ENCODE measurements at regions of chr10 and their contacts with region 1.

Region 1: GRCh38 chr10:62244780-62245467 is 23.7 kb downstream of the RTKN2 start:
- DNase-seq: peak; percentile 53
- ATAC-seq: peak; percentile 84
- H3K4me3 ChIP-seq: no peak overlapping the region
- H3K27ac ChIP-seq: no peak overlapping the region
- H3K4me1 ChIP-seq: peaks cover 6 to 13% of the 10 kb centered on the region in 2 experiments
- H3K27me3 ChIP-seq: no peaks in the 10 kb centered on the region
- CTCF ChIP-seq: peak; percentile 83 to 91 (median 83)
- POLR2A ChIP-seq: no peak
- RAD21 ChIP-seq: peak; percentile 86

Region 2: DNA sequence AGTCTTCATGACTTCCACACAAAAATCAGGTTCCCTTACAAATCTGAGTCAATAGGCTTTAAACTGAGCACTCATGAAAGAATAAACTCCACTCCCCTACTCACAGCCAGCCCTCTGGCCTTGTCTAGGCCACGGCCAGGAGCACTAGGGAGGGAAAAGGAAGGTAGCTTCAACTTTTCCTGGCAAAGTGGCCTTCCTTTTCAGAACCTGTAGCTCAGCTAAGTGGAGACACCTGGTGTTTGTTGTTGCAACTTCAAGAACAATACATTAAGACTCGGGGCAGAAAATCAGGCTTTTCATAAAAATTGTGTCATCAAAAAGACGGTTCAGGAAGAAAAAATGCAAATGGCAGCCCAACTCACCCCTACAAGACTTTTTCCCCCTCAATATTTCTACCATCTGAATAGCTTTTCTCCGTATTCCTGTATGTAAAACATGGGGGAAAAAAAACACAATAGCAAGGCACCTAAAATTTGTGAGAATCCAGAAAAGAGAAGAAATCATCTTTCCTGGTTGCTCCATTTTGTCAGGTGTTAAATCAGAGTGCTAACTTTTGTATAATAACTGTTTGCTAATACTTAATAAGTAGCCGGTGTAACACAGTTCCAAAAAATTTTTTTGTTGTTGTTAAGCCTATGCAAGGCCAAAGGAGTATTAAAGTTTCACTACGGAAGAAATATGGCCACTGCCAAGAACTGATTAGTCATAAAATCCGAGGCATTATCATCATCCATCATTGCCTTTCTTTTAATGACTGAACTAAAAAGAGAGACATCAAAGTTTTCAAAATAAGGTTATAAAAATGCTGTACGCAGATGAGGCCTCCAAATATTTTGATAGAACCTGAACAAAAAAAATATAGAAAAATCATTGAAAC is 409.6 kb before region 1 on chr10:
- CTCF ChIA-PET with region 1: no interaction called
- POLR2A ChIA-PET with region 1: no interaction called
- RAD21 ChIA-PET with region 1: no interaction called
- intact Hi-C with region 1: loop called (anchors 10 kb)
- DNase-seq: peak; percentile 71
- ATAC-seq: peak; percentile 62
- H3K4me3 ChIP-seq: peak overlapping the region in 1 of 2 experiments; percentile 41; a peak in 1 of 4 replicates
- H3K27ac ChIP-seq: peak overlapping the region; percentile 85; the same call in 1 of the 2 replicates
- H3K4me1 ChIP-seq: peaks cover 32 to 50% of the 10 kb centered on the region in 2 experiments
- H3K27me3 ChIP-seq: no peaks in the 10 kb centered on the region
- CTCF ChIP-seq: peak; percentile 62 to 63 (median 62); a peak in 5 of 6 replicates
- POLR2A ChIP-seq: no peak
- RAD21 ChIP-seq: peak; percentile 80

Region 3: DNA sequence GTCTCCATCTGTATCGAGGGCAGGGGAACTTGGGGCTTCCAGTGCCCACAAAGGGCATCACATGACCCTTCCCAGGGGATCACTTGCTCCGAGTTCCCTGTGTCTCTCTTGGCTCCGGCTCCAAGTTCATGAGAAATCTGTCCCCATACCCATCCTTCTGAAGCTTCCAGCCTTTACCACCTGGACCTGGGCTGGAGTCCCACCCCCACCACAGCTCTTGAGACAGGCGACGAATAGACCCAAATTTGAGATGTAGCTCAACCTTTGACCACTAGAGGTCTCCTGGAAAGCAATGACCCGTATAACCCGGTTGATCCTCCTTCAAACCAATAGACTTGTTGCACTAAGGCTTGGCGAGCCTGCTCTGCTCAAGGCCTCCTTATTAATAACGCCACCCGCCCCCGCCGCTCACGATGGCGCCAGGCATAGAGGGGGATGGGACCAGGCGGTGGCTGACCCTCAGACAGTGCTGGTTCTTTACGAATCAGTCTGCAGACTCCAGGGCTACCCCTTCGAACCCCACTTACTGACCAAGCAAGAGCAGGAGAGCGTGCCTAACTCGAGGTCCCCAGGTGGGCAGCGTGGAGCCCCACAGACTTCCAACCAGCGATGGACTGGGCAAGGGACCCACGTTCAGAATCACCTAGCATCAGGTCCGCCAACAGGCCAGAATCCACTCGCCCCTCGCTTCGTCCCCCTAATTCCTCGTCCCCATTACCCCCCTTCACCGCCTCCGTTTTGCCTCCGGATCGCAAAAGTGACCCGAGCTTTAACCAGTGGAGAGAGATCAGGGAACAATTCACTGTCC is 347.9 kb before region 1 on chr10:
- CTCF ChIA-PET with region 1: interaction called, 16 read pairs
- POLR2A ChIA-PET with region 1: no interaction called
- RAD21 ChIA-PET with region 1: no interaction called
- intact Hi-C with region 1: loop called (anchors 2 kb)
- DNase-seq: peak; percentile 80
- ATAC-seq: peak; percentile 79
- H3K4me3 ChIP-seq: peak overlapping the region in 1 of 2 experiments; percentile 18; a peak in 1 of 4 replicates
- H3K27ac ChIP-seq: peak overlapping the region; percentile 43; the same call in 1 of the 2 replicates
- H3K4me1 ChIP-seq: peaks cover 15 to 31% of the 10 kb centered on the region in 2 experiments
- H3K27me3 ChIP-seq: no peaks in the 10 kb centered on the region
- CTCF ChIP-seq: peak; percentile 50 to 70 (median 69); a peak in 5 of 6 replicates
- POLR2A ChIP-seq: no peak
- RAD21 ChIP-seq: peak; percentile 53

Region 4: DNA sequence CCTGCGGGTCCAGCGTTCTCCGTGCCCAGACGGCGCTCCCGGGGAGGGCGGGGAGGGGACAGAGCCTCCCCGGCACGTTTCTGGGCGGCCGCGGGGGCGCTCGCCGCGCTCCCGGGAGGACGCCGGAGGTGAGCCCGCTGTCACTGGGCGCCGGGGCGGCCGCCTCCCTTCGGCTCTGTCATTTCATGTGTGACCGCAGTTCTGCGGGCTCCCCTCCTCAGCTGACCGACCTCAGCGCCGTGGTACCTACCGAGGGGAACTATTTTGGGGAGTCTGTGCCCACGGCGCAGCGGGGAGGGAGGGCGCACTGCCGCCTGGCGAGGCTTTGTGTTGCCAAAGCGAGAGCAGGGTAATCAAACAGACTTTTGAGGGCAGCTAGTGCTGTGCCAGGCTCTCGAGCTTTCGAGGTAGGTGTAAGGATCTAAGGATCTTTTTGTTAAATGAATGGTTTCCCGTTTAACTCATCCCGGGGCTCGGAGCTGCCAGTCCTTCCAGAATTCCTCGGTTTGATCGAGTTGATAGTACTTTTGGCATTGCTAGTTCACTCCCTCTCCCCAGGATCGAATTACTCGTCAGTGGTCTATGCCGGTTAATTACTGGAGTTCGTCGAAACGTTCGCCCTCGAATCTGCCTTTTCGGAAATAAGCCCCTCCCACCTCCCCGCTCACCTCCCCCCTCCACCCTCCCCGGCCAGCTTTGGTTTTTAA is 341.6 kb before region 1 on chr10:
- CTCF ChIA-PET with region 1: interaction called, 3 read pairs
- POLR2A ChIA-PET with region 1: no interaction called
- RAD21 ChIA-PET with region 1: no interaction called
- intact Hi-C with region 1: loop called (anchors 2 kb)
- DNase-seq: peak; percentile 42
- ATAC-seq: peak; percentile 64
- H3K4me3 ChIP-seq: peak overlapping the region; percentile 64 to 75
- H3K27ac ChIP-seq: peak overlapping the region; percentile 92
- H3K4me1 ChIP-seq: peaks cover 13 to 29% of the 10 kb centered on the region in 2 experiments; a peak in 3 of 4 replicates
- H3K27me3 ChIP-seq: no peaks in the 10 kb centered on the region
- CTCF ChIP-seq: peak in 2 of 3 experiments; percentile 23 to 24; a peak in 2 of 6 replicates
- POLR2A ChIP-seq: no peak
- RAD21 ChIP-seq: no peak

Region 5: DNA sequence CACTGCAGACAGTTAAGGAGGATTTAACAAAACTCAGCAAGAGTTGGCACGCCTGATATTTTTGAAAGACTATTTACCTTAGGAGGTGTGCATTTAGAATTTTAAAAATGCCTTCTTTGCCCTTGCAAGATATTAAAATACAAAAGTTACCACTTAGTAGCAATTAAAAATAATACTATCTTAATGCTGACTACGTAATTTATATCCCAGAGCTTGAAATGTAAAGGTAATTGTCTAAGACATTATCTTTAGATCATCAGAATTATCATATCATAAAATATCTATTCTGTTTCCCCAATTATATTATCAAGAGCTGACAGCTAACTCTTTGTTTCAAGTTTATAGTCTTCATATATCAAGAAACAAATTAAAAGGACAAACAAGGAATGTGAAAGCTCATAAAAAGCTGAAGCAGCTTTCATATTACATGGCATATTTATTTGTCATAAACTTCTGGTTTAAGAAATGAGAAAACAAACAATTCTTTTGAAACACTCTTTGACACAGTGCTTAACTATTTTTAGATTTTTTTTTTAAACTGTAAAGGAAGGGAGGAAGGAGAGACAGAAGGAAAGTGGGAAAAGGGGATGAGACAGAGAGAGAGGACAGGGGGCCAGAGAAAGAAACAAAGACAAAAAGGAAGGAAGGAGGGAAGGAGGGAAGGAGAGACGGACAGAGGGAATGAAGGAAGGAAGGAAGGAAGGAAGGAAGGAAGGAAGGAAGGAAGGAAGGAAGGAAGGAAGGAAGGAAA is 49.8 kb before region 1 on chr10:
- CTCF ChIA-PET with region 1: no interaction called
- POLR2A ChIA-PET with region 1: no interaction called
- RAD21 ChIA-PET with region 1: no interaction called
- intact Hi-C with region 1: no loop called
- DNase-seq: no peak
- ATAC-seq: no peak
- H3K4me3 ChIP-seq: no peak overlapping the region
- H3K27ac ChIP-seq: no peak overlapping the region
- H3K4me1 ChIP-seq: no peaks in the 10 kb centered on the region
- H3K27me3 ChIP-seq: no peaks in the 10 kb centered on the region
- CTCF ChIP-seq: no peak
- POLR2A ChIP-seq: no peak
- RAD21 ChIP-seq: no peak